ENCODE measurements at regions of chr1 and their contacts with region 1.

Region 1: DNA sequence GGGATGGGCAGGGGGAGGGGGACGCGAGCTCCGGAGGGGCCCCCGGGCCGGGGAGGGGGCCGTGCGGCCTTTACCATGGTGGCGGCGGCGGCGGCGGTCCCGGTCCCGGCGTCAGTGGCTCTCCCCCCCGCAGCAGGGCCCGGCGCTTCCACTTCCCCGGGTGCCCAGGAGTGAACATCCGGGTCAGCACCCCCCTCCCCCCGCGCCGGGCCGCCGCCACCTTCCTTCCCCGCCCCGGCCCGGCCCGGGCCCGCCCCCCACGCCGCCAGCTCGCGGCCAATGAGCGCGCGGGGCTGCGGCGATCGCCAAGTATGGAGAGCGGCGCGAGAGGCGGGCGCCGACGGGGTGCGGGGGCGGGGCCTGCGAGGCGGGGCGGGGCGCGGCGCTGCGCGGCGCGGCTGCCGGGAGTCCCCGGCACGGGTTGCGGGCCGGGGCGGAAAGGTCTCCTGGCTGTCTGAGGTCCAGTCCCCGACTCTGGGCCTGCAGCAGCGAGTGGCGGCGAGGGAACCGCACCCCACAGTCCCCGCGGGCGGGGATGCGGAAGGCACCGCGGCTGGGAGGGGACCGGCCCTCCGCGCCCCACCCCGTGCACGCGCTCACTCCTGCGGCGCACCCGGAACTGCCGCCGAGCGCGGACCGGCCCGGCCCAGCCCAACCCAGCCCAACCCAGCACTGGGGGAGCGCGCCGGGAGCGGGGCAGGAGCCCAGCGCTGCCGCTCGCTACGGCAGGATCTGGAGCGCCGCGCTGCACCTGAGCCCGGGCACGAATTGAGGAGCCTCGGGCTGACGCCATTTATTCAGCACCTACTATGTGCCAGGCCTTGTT is at the start of gene CAPZB:
- DNase-seq: peak; percentile 97
- H3K4me3 ChIP-seq: peak within 1 kb of the TSS; percentile 66 to 100 (median 99)
- H3K27ac ChIP-seq: peak within 1 kb of the TSS; percentile 99 to 100 (median 100)
- H3K4me1 ChIP-seq: peaks cover 39 to 62% (median 55%) of the 10 kb centered on the region in 4 donors
- H3K27me3 ChIP-seq: no peaks in the 10 kb centered on the region
- CTCF ChIP-seq: no peak
- EP300 ChIP-seq: no peak
- POLR2A ChIP-seq: peak; percentile 97
- total RNA-seq, gene CAPZB: 127 to 404 (median 136) TPM

Region 2: GRCh38 chr1:19390901-19391595 is 94.5 kb before region 1 on chr1:
- in situ Hi-C with region 1: loop called in 2 of 4 experiments (anchors 10 kb)
- intact Hi-C with region 1: loop called (anchors 5 kb)
- DNase-seq: peak; percentile 71
- H3K4me3 ChIP-seq: no peak overlapping the region
- H3K27ac ChIP-seq: peak overlapping the region; percentile 69 to 85 (median 77)
- H3K4me1 ChIP-seq: peaks cover 44 to 75% (median 50%) of the 10 kb centered on the region in 4 donors
- H3K27me3 ChIP-seq: no peaks in the 10 kb centered on the region
- CTCF ChIP-seq: peak; percentile 78 to 87 (median 80)
- EP300 ChIP-seq: no peak
- POLR2A ChIP-seq: no peak

Region 3: GRCh38 chr1:19398309-19398760 is 87.2 kb before region 1 on chr1:
- in situ Hi-C with region 1: loop called in 2 of 4 experiments (anchors 10 kb)
- intact Hi-C with region 1: loop called (anchors 5 kb)
- DNase-seq: peak; percentile 39
- H3K4me3 ChIP-seq: no peak overlapping the region
- H3K27ac ChIP-seq: peak overlapping the region; percentile 40 to 77 (median 63)
- H3K4me1 ChIP-seq: peaks cover 31 to 66% (median 45%) of the 10 kb centered on the region in 4 donors
- H3K27me3 ChIP-seq: no peaks in the 10 kb centered on the region
- CTCF ChIP-seq: peak in 4 of 5 experiments; percentile 13 to 45 (median 24)
- EP300 ChIP-seq: no peak
- POLR2A ChIP-seq: no peak

Region 4: DNA sequence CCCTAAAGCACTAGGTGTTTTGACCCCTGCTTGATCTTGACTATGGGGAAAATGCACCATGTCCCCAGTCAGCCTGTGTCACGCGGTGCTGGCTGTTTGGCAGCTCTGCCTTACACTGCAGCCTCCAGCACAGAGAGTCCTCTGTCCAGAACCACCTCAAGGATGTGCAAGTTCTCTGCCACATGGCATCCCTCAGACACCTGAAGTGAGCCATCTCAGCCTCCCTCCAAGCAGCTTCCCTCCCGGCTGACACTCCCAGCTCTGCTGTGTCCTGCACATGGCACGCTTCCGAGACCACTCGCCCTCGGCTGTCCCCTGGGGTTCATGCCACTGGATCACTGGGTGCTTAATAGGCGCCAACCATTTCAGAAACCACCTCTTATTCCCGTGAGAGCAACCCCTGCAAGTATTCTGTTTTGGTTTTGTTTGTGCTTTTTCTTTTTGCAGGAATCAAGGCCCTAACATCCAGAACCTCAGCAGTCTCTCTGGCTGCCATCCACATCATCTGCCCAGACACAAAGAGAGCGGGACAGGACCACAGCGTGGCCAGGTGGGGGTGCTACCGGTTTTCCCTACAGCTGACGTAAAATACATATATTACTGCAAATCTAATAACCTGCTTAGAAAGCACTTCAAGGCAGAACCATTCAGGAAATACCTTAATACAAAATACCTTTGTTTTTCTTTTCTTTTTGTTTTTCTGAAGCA is 46.0 kb before region 1 on chr1:
- in situ Hi-C with region 1: no loop called
- intact Hi-C with region 1: loop called (anchors 10 kb)
- DNase-seq: no peak
- H3K4me3 ChIP-seq: no peak overlapping the region
- H3K27ac ChIP-seq: peak overlapping the region; percentile 80 to 93 (median 82)
- H3K4me1 ChIP-seq: peaks cover 60 to 97% (median 68%) of the 10 kb centered on the region in 4 donors
- H3K27me3 ChIP-seq: no peaks in the 10 kb centered on the region
- CTCF ChIP-seq: no peak
- EP300 ChIP-seq: no peak
- POLR2A ChIP-seq: no peak

Region 5: DNA sequence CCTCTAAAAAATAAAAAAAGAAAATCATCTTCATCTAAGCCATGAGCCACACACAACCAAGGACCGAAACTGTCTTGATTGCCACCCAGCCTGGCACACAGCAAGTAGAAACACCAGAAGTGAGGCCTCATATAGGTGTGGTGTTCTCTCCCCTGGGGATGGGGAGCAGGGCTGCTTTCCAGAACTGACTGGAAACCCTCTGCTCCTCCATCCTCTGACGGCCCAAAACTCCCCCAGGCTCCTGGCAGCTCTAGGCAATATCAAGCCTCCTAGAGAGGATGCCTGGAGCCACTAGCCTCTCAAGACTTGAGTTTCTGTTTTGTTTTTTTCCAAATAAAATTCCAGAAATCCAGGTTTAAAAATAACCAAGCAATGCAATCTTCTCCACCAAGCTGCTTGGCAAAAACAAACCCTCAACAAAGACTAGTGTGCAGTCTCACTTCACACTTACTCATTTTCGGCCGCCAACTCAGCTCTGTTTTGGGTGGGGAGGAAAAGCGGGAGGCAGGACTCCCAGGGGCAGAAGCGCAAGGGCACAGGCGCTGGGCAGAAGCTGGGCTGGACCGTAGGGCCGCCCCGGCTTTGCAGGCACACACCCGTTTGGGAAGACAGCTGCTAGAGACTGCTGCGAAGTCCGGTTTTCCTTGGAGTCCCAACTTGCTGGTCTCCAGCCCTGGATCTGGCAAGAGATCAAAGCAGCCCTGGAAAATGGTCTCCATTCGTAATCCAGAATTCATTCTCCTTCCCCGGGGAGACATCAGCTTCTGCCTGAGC is 77.9 kb after region 1 on chr1:
- in situ Hi-C with region 1: no loop called
- intact Hi-C with region 1: no loop called
- DNase-seq: peak; percentile 38
- H3K4me3 ChIP-seq: peak overlapping the region in 2 of 4 donors; percentile 16
- H3K27ac ChIP-seq: peak overlapping the region; percentile 73 to 81 (median 74)
- H3K4me1 ChIP-seq: peaks cover 0 to 17% (median 2%) of the 10 kb centered on the region in 4 donors
- H3K27me3 ChIP-seq: no peaks in the 10 kb centered on the region
- CTCF ChIP-seq: no peak
- EP300 ChIP-seq: no peak
- POLR2A ChIP-seq: no peak

Region 6: GRCh38 chr1:19596714-19597495 is 111.3 kb after region 1 on chr1:
- in situ Hi-C with region 1: loop called in 1 of 4 experiments (anchors 25 kb)
- intact Hi-C with region 1: loop called (anchors 2 kb)
- DNase-seq: peak; percentile 98
- H3K4me3 ChIP-seq: peak overlapping the region; percentile 77 to 96 (median 86)
- H3K27ac ChIP-seq: peak overlapping the region; percentile 97 to 99 (median 98)
- H3K4me1 ChIP-seq: peaks cover 23 to 64% (median 40%) of the 10 kb centered on the region in 4 donors
- H3K27me3 ChIP-seq: no peaks in the 10 kb centered on the region
- CTCF ChIP-seq: no peak
- EP300 ChIP-seq: no peak
- POLR2A ChIP-seq: peak; percentile 95

Region 7: GRCh38 chr1:19628879-19629278 is 143.3 kb after region 1 on chr1:
- in situ Hi-C with region 1: no loop called
- intact Hi-C with region 1: no loop called
- DNase-seq: no peak
- H3K4me3 ChIP-seq: no peak overlapping the region
- H3K27ac ChIP-seq: no peak overlapping the region
- H3K4me1 ChIP-seq: no peaks in the 10 kb centered on the region
- H3K27me3 ChIP-seq: no peaks in the 10 kb centered on the region
- CTCF ChIP-seq: no peak
- EP300 ChIP-seq: no peak
- POLR2A ChIP-seq: no peak

Region 8: GRCh38 chr1:19643602-19644394 is 158.2 kb after region 1 on chr1 and contains the start of gene NBL1:
- in situ Hi-C with region 1: no loop called
- intact Hi-C with region 1: loop called (anchors 5 kb)
- DNase-seq: peak; percentile 84
- H3K4me3 ChIP-seq: peak within 1 kb of the TSS; percentile 60 to 91 (median 77)
- H3K27ac ChIP-seq: peak within 1 kb of the TSS; percentile 95 to 98 (median 96)
- H3K4me1 ChIP-seq: peaks cover 24 to 67% (median 64%) of the 10 kb centered on the region in 4 donors
- H3K27me3 ChIP-seq: no peaks in the 10 kb centered on the region
- CTCF ChIP-seq: no peak
- EP300 ChIP-seq: no peak
- POLR2A ChIP-seq: peak; percentile 25
- total RNA-seq, gene NBL1: 122 to 238 (median 204) TPM

Region 9: DNA sequence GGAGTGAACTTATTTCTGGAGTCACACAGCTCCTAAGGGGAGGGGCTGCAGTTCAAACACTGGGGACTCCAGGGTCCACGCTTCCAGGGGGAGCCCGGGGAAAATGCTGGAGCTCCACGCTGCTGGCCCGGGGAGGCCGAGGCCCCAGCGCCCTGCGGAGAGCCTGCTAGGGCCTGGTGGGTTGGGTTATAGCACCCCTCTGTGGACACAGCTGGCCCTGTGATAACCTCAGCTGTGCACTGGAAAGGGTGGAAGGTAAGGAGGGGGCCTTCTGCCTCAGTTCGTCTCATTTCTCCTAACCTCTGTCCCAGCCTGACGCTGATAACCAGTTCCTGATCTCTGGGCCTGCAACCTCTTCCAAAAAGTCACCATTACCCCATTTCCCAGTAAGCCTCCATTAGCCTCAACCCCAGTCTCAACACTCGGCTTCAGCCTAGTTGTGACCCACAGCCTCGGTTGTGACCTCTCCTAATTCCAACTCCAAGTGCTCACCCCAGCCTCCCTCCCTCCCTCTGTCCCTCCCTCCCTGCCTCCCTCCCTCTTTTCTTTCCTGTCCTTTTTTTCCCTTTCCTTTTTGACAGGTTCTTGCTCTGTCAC is 165.7 kb after region 1 on chr1:
- in situ Hi-C with region 1: loop called in 2 of 4 experiments (anchors 10 to 25 kb)
- intact Hi-C with region 1: no loop called
- DNase-seq: peak; percentile 43
- H3K4me3 ChIP-seq: peak overlapping the region in 1 of 4 donors; percentile 23
- H3K27ac ChIP-seq: peak overlapping the region; percentile 71 to 98 (median 94)
- H3K4me1 ChIP-seq: peaks cover 26 to 73% (median 57%) of the 10 kb centered on the region in 4 donors
- H3K27me3 ChIP-seq: no peaks in the 10 kb centered on the region
- CTCF ChIP-seq: peak; percentile 40 to 53 (median 49)
- EP300 ChIP-seq: no peak
- POLR2A ChIP-seq: no peak